Prostate gland (tissue), 2 donors: ENCODE measurements at regions of chr19 and their contacts with region 1.

Region 1: DNA sequence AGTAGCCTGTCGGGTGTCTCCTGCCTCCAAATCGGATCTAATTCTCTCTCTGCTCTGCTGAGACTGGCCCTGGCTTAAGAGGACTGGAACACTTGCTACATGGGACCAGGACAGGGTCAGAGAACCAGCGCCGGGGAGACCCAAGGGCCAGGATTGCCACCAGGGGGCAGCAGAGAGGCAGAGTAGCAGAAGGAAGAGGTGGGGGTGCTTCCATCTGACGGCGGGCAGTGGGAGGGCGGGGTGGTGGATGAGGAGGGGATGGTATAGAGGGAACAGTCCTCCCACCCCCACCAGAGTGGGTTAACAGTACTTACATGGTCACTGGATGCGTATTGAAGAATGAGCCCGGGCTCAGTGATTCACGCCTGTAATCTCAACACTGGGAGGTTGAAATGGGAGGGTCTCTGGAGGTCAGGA is 11.9 kb downstream of the SELENOW start:
- DNase-seq: peak; percentile 63
- H3K4me3 ChIP-seq: no peak overlapping the region
- H3K27ac ChIP-seq: no peak overlapping the region
- H3K4me1 ChIP-seq: no peaks in the 10 kb centered on the region
- H3K27me3 ChIP-seq: no peaks in the 10 kb centered on the region
- CTCF ChIP-seq: peak; percentile 36 to 82 (median 66)
- POLR2A ChIP-seq: no peak

Region 2: DNA sequence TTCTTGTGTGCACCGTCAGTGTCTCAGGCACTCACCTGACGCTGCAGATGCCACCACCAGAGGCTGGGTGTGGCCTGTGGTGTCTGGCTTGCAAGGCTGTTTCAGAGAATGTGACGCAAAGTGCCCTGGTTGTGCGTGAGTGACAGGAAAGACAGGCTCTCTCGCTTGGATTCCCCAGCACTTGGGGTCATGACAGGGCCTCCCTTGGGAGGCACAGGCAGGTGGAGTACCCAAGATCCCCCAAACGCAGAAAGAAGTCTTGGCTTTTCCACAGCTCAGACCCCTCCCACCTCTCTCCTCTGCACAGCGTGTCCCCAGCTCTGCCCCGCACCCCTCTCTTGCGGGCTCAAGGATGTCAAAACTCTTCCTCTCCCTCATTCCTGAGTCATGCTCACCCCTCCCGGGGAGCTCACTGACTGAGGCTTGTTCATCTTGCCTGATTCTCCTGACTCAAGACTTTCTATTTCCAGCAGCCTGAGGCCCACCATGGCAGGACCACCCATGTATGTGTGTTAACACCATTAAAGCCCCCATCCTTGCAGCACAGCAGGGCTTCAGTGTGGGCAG is 420.3 kb before region 1 on chr19:
- intact Hi-C with region 1: no loop called
- DNase-seq: no peak
- H3K4me3 ChIP-seq: no peak overlapping the region
- H3K27ac ChIP-seq: no peak overlapping the region
- H3K4me1 ChIP-seq: no peaks in the 10 kb centered on the region
- H3K27me3 ChIP-seq: no peaks in the 10 kb centered on the region
- CTCF ChIP-seq: no peak
- POLR2A ChIP-seq: no peak

Region 3: DNA sequence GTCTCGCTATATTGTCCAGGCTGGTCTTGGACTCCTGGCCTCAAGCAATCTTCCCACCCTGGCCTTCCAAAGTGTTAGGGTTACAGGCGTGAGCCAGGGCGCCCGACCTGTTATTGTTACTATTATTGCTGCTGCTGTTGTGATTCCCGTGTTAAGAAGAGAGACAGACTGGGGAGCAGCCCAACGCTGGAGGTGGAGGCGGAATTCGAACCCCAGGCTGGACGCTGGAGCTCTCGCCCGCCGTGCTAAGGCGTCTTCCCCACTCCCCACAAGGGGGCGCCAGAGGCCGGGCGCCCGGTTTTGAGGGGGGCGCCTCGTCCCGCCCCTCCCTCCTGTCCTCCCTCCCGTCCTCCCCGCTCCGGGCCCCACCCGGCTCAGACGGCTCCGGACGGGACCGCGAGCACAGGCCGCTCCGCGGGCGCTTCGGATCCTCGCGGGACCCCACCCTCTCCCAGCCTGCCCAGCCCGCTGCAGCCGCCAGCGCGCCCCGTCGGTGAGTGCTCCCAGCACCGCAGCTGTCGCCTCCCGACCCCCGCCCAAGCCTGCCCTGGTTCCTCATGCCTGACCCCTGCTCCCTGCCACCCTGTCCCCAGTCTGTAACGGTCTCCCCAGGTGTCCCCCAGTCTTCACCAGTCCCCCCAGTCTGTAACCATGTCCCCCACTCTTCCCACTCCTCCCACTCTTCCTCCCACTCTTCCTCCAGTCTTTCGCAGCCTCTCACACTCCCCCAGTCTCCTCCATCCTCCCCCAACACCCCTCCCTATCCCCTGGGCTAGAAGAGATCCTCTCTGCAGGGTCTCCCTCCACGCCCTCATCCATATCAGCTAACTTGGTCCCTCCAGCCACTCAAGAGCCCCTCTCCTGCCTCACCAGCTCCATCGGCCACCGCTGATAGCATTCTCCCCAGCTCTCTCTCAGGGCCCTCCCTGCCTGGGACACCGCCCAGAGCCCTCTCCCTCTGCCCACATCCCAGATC is 77.1 kb before region 1 on chr19 and contains the start of gene EHD2:
- intact Hi-C with region 1: loop called (anchors 2 kb)
- DNase-seq: peak; percentile 42
- H3K4me3 ChIP-seq: peak within 1 kb of the TSS; percentile 44 to 51
- H3K27ac ChIP-seq: peak within 1 kb of the TSS; percentile 83 to 87
- H3K4me1 ChIP-seq: no peaks in the 10 kb centered on the region
- H3K27me3 ChIP-seq: no peaks in the 10 kb centered on the region
- CTCF ChIP-seq: peak; percentile 95 to 98 (median 96)
- POLR2A ChIP-seq: peak; percentile 84
- total RNA-seq, gene EHD2: 48.7 to 83.2 TPM

Region 4: DNA sequence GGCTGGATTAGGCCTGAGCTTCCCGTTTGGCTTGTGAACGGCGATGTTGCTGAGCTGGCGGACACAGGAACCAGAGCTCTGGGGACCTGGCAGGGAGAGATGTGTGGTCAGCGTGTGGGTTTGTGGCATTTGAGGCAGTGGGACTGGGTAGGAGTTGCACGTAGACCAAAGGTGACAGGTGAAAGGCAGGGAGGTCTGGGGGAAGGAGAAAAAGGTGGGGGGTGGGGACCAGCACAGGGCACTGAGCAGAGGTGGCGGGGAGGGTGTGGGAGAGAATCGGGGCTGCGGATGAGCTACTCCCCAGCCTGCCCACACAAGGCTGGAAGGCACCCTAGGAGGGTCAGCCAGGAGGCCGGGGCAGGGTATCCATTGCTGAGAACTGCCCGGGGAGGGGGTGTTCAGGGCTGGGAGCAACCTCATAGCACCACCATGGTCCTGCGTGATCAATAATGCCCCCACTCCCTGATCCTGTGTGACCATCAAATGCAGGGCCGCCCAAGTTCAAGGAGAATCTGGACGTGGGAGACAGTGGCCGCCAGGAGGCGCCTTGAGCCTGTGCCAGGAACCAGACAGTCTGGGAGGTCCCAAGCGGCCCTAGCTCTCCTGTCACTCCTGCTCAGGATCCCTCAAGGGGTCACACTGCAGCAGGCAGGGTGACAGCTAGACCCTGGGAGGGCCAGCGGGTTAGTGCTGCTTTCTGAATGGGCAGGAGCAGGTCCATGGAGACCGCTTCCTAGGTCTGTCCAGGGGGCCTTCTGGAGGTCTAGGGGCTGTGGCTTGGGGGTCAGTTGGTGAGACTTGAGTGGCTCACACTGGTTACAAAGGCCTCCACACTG is 24.7 kb before region 1 on chr19:
- intact Hi-C with region 1: loop called (anchors 2 kb)
- DNase-seq: peak; percentile 44
- H3K4me3 ChIP-seq: no peak overlapping the region
- H3K27ac ChIP-seq: no peak overlapping the region
- H3K4me1 ChIP-seq: no peaks in the 10 kb centered on the region
- H3K27me3 ChIP-seq: no peaks in the 10 kb centered on the region
- CTCF ChIP-seq: peak; percentile 21 to 74 (median 71)
- POLR2A ChIP-seq: no peak